ENCODE measurements at regions of chr1 and their contacts with region 1.

Region 1: DNA sequence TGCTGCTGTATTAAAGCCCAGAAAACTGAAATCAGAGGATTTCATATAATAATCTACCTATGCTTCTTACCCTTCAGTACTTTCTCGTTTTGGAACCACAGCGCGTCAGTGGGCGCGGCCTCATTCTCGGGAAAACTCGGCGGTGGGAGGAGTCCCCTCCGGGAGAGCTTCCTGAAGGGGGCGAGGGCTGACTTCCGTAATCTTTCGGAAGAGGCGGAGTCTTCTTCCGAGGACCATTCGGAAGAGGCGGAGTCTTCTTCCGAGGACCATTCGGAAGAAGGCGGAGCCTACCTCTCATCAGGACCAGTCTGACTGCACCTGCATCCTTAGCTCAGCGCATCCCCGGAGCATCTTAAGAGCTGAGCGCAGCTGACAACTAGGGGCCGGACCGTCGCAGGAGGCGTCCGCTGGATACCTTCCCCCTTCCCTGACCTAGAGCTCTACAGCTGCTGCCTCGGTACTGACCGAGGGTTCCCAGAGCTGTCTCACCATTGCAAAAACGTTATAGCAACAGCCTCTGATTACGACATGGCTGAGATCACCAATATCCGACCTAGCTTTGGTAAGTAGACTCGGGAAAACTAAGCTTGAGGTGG is at the start of gene SYT11:
- DNase-seq: peak; percentile 83 to 97 (median 92)
- ATAC-seq: peak; percentile 89
- H3K4me3 ChIP-seq: peak within 1 kb of the TSS; percentile 62
- H3K4me3 Mint-ChIP-seq: peak within 1 kb of the TSS; percentile 93
- H3K27ac ChIP-seq: peak within 1 kb of the TSS; percentile 42 to 81
- H3K27ac Mint-ChIP-seq: peak within 1 kb of the TSS; percentile 81
- H3K4me1 ChIP-seq: peaks cover 38% of the 10 kb centered on the region
- H3K4me1 Mint-ChIP-seq: peaks cover 33% of the 10 kb centered on the region
- H3K27me3 ChIP-seq: peaks cover 0 to 8% of the 10 kb centered on the region in 2 experiments
- H3K27me3 Mint-ChIP-seq: peaks cover 25% of the 10 kb centered on the region
- CTCF ChIP-seq: no peak
- total RNA-seq, gene SYT11: 6.1 to 6.3 TPM

Region 2: DNA sequence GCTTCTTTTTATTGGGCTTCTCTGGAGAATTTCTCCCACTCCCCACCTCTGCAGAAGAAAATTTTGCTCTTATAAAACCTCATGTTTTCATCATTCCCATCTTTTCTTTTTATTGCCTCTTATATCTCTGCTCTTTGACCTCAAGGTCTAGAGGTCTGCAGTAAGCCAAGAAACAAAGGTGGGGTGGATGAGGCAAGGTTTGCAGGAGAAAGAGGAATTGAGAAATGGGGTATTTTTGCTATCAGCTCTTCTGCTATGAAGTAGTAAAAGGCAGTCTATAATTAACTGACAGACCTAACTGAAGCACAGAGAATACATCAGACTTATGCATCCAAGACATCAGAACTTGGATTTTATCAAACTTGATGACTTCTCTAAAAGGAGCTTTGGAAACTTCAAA is 22.9 kb after region 1 on chr1:
- CTCF ChIA-PET with region 1: no interaction called
- POLR2A ChIA-PET with region 1: no interaction called
- intact Hi-C with region 1: no loop called
- DNase-seq: no peak
- ATAC-seq: no peak
- H3K4me3 ChIP-seq: no peak overlapping the region
- H3K4me3 Mint-ChIP-seq: no peak overlapping the region
- H3K27ac ChIP-seq: no peak overlapping the region
- H3K27ac Mint-ChIP-seq: no peak overlapping the region
- H3K4me1 ChIP-seq: no peaks in the 10 kb centered on the region
- H3K4me1 Mint-ChIP-seq: no peaks in the 10 kb centered on the region
- H3K27me3 ChIP-seq: no peaks in the 10 kb centered on the region
- H3K27me3 Mint-ChIP-seq: no peaks in the 10 kb centered on the region
- CTCF ChIP-seq: no peak

Region 3: GRCh38 chr1:155893389-155894142 is 34.2 kb after region 1 on chr1:
- CTCF ChIA-PET with region 1: no interaction called
- POLR2A ChIA-PET with region 1: interaction called, 6 read pairs
- intact Hi-C with region 1: loop called in 1 of 2 experiments (anchors 5 kb)
- DNase-seq: peak in 10 of 14 experiments; percentile 4 to 66 (median 15)
- ATAC-seq: peak; percentile 98
- H3K4me3 ChIP-seq: no peak overlapping the region
- H3K4me3 Mint-ChIP-seq: peak overlapping the region; percentile 11
- H3K27ac ChIP-seq: no peak overlapping the region
- H3K27ac Mint-ChIP-seq: peak overlapping the region; percentile 79
- H3K4me1 ChIP-seq: peaks cover 12% of the 10 kb centered on the region
- H3K4me1 Mint-ChIP-seq: peaks cover 21% of the 10 kb centered on the region
- H3K27me3 ChIP-seq: no peaks in the 10 kb centered on the region
- H3K27me3 Mint-ChIP-seq: no peaks in the 10 kb centered on the region
- CTCF ChIP-seq: no peak

Region 4: GRCh38 chr1:155911156-155912055 is 52.1 kb after region 1 on chr1 and contains the start of gene RIT1:
- CTCF ChIA-PET with region 1: no interaction called
- POLR2A ChIA-PET with region 1: interaction called, 4 read pairs
- intact Hi-C with region 1: loop called (anchors 2 to 10 kb)
- DNase-seq: peak; percentile 73 to 93 (median 82)
- ATAC-seq: peak; percentile 98
- H3K4me3 ChIP-seq: peak within 1 kb of the TSS; percentile 67
- H3K4me3 Mint-ChIP-seq: peak within 1 kb of the TSS; percentile 100
- H3K27ac ChIP-seq: peak within 1 kb of the TSS; percentile 57 to 60
- H3K27ac Mint-ChIP-seq: peak within 1 kb of the TSS; percentile 90
- H3K4me1 ChIP-seq: peaks cover 25% of the 10 kb centered on the region
- H3K4me1 Mint-ChIP-seq: peaks cover 28% of the 10 kb centered on the region
- H3K27me3 ChIP-seq: no peaks in the 10 kb centered on the region
- H3K27me3 Mint-ChIP-seq: no peaks in the 10 kb centered on the region
- CTCF ChIP-seq: no peak
- total RNA-seq, gene RIT1: 66.2 to 67.0 TPM

Region 5: GRCh38 chr1:156020292-156021089 is 161.2 kb after region 1 on chr1 and contains the start of gene SSR2:
- CTCF ChIA-PET with region 1: no interaction called
- POLR2A ChIA-PET with region 1: no interaction called
- intact Hi-C with region 1: loop called in 1 of 2 experiments (anchors 1 kb)
- DNase-seq: peak; percentile 61 to 94 (median 77)
- ATAC-seq: peak; percentile 99
- H3K4me3 ChIP-seq: peak within 1 kb of the TSS; percentile 78
- H3K4me3 Mint-ChIP-seq: peak within 1 kb of the TSS; percentile 100
- H3K27ac ChIP-seq: peak within 1 kb of the TSS; percentile 38 to 77
- H3K27ac Mint-ChIP-seq: peak within 1 kb of the TSS; percentile 91
- H3K4me1 ChIP-seq: peaks cover 18% of the 10 kb centered on the region
- H3K4me1 Mint-ChIP-seq: peaks cover 41% of the 10 kb centered on the region
- H3K27me3 ChIP-seq: no peaks in the 10 kb centered on the region
- H3K27me3 Mint-ChIP-seq: no peaks in the 10 kb centered on the region
- CTCF ChIP-seq: no peak
- total RNA-seq, gene SSR2: 223 to 225 TPM

Region 6: GRCh38 chr1:156096640-156097391 is 237.5 kb after region 1 on chr1:
- CTCF ChIA-PET with region 1: no interaction called
- POLR2A ChIA-PET with region 1: no interaction called
- intact Hi-C with region 1: no loop called
- DNase-seq: peak; percentile 73 to 99 (median 83)
- ATAC-seq: peak; percentile 78
- H3K4me3 ChIP-seq: peak overlapping the region; percentile 21
- H3K4me3 Mint-ChIP-seq: peak overlapping the region; percentile 26
- H3K27ac ChIP-seq: peak overlapping the region; percentile 51 to 89
- H3K27ac Mint-ChIP-seq: peak overlapping the region; percentile 82
- H3K4me1 ChIP-seq: peaks cover 39% of the 10 kb centered on the region
- H3K4me1 Mint-ChIP-seq: peaks cover 39% of the 10 kb centered on the region
- H3K27me3 ChIP-seq: no peaks in the 10 kb centered on the region
- H3K27me3 Mint-ChIP-seq: peaks cover 4% of the 10 kb centered on the region
- CTCF ChIP-seq: peak; percentile 93